ENCODE measurements at regions of chr1 and their contacts with region 1.

Region 1: GRCh38 chr1:200802865-200803512 is 64.3 kb downstream of the CAMSAP2 start:
- DNase-seq: peak; percentile 84 to 85
- H3K4me3 ChIP-seq: no peak overlapping the region
- H3K27ac ChIP-seq: no peak overlapping the region
- H3K4me1 ChIP-seq: peaks cover 0 to 9% (median 0%) of the 10 kb centered on the region in 4 donors
- H3K27me3 ChIP-seq: no peaks in the 10 kb centered on the region
- CTCF ChIP-seq: peak; percentile 83 to 90

Region 2: GRCh38 chr1:200392625-200393185 is 410.3 kb before region 1 on chr1:
- intact Hi-C with region 1: no loop called
- DNase-seq: no peak
- H3K4me3 ChIP-seq: no peak overlapping the region
- H3K27ac ChIP-seq: no peak overlapping the region
- H3K4me1 ChIP-seq: no peaks in the 10 kb centered on the region
- H3K27me3 ChIP-seq: no peaks in the 10 kb centered on the region
- CTCF ChIP-seq: no peak

Region 3: DNA sequence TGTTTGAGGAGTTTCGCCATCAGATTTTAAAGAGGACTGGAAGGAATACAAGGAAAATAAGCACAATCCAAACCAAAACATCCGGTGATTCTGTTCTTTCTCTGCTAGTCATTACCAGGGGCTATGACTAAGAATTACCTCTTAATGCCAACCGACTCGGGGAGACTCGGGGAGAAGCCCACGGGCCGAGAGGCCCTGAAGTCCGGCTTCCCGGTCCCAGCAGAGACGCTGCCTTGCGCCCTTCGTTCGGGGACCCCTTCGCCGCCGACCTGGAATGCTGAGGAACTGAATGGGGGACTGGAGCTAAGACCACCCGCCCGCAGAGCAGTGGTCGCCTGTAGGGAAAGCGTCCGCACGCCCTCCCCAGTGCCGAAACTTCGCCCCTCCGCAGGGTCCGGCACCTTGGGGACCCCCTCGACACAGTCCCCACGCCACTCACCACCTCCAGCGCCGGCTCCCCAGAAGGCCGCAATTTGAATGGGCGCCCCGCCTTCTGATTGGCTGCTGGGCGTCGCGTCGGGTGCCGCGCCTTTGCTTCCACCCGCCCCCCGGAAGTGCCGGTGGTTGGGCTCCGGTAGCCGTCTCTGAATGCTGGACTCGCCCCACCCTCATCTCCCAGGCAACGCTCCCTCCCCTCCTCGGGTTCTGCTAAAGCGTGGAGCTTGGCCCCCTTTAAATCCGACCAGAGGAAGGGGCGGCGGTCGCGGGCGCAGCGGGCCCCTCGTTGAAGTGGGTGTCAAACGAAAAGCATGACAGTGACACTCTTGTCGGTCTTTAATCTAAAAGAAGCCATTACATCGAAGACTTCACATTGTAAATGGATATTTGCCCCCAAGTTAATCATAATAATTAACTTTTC is 182.5 kb before region 1 on chr1 and contains the start of gene KIF14:
- intact Hi-C with region 1: loop called (anchors 2 kb)
- DNase-seq: peak; percentile 93 to 94
- H3K4me3 ChIP-seq: peak within 1 kb of the TSS; percentile 50 to 64
- H3K27ac ChIP-seq: peak within 1 kb of the TSS; percentile 33 to 41
- H3K4me1 ChIP-seq: peaks cover 0 to 17% (median 2%) of the 10 kb centered on the region in 4 donors
- H3K27me3 ChIP-seq: no peaks in the 10 kb centered on the region
- CTCF ChIP-seq: no peak

Region 4: GRCh38 chr1:200738740-200739498 is 64.1 kb before region 1 on chr1 and contains the start of gene CAMSAP2:
- intact Hi-C with region 1: loop called (anchors 10 kb)
- DNase-seq: peak; percentile 90 to 94
- H3K4me3 ChIP-seq: peak within 1 kb of the TSS; percentile 78 to 96
- H3K27ac ChIP-seq: peak within 1 kb of the TSS; percentile 97 to 100
- H3K4me1 ChIP-seq: peaks cover 0 to 36% (median 9%) of the 10 kb centered on the region in 4 donors
- H3K27me3 ChIP-seq: no peaks in the 10 kb centered on the region
- CTCF ChIP-seq: peak in 1 of 2 experiments; percentile 9

Region 5: DNA sequence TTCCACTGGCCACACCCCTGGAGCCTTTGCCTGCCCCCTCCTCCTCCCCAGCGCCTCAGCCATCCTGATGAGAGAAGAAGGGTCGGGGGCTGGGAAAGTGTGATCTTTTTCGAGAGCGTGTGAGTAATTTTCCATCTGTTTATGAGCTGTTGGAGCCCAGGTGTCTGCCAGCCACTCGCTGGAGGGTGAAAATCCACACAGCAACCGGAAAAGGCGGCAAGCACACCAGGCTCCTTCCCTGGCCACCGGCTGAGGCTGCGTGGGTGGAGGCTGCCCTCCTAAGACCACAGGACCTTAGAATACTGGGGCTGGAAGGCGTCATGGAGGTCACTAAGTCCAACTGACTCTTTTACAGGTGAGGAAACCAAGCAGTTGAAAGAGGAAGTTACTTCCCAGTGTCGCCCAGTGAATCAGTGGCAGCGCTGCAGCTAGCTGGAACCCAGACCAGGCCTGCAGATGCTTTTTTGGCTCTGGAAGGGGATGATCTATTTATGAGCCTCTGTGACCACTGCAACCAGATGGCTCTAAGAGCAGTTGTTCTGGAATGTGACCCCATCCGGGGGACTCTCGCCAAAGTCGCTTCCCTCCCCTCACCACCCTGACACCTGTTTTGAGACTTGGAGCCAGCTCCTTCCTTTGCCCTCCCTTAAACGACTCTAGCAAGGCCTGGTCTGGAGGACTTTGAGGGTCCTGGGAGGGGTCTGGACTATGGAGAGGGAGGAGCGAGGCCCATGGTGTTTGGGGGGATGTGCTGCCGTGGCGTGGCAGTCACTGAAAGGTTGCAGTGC is 1445.1 kb after region 1 on chr1:
- intact Hi-C with region 1: no loop called
- DNase-seq: no peak
- H3K4me3 ChIP-seq: no peak overlapping the region
- H3K27ac ChIP-seq: no peak overlapping the region
- H3K4me1 ChIP-seq: peaks cover 0 to 9% (median 7%) of the 10 kb centered on the region in 4 donors
- H3K27me3 ChIP-seq: no peaks in the 10 kb centered on the region
- CTCF ChIP-seq: no peak